Activated CD4-positive, alpha-beta memory T cell treated with anti-CD3 and anti-CD28 coated beads for 36 hours (primary cell): ENCODE measurements at regions of chr6 and their contacts with region 1.

Region 1: GRCh38 chr6:116570856-116571682 is at the start of gene RWDD1:
- DNase-seq: peak; percentile 99
- H3K4me3 Mint-ChIP-seq: peak within 1 kb of the TSS; percentile 97
- H3K27ac Mint-ChIP-seq: peak within 1 kb of the TSS; percentile 93
- H3K4me1 Mint-ChIP-seq: peaks cover 49% of the 10 kb centered on the region
- H3K27me3 Mint-ChIP-seq: no peaks in the 10 kb centered on the region
- total RNA-seq, gene RWDD1: 46.7 to 49.1 TPM

Region 2: DNA sequence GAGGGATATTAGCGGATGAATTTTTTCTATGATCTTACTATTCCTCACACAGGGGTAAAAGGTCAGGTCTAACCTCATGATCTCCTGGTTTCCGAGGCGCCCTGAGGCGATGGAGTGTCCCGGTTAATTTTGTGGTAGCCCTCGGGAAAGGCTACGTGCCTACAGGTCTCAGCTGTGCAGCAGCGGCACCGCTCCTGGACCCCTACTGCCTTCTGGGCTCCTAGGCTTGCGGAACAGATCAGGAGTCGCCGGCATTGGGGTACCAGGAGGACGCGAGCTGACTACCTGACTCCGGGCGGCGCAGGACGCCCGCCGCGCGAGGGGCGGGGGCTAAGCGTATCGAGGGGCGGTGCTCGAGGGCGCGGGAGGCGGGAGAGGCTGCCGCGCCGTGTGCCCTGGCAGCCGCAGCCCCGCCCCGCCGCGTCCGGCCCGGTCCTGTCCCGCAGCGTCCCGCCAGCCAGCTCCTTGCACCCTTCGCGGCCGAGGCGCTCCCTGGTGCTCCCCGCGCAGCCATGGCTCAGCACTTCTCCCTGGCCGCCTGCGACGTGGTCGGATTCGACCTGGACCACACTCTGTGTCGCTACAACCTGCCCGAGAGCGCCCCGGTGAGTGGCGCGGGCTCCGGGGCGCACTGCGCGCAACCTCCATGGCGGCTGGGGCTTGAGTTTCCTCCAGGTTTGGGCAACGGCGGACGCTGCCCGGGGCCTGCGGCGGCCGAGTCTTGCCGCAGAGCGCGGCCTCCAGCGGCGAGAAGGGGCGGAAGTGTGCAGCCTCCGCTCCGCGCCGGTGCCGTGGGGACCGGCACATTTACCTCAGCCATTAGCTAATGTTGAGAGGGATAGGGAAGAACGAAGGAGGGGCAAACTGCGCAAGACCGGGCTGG is 470.4 kb before region 1 on chr6 and contains the start of gene NT5DC1:
- CTCF ChIA-PET with region 1: no interaction called
- POLR2A ChIA-PET with region 1: interaction called, 3 read pairs
- intact Hi-C with region 1: loop called (anchors 1 kb)
- DNase-seq: peak; percentile 90
- H3K4me3 Mint-ChIP-seq: peak within 1 kb of the TSS; percentile 89
- H3K27ac Mint-ChIP-seq: peak within 1 kb of the TSS; percentile 82
- H3K4me1 Mint-ChIP-seq: peaks cover 47% of the 10 kb centered on the region
- H3K27me3 Mint-ChIP-seq: no peaks in the 10 kb centered on the region
- total RNA-seq, gene NT5DC1: 51.1 to 51.3 TPM

Region 3: DNA sequence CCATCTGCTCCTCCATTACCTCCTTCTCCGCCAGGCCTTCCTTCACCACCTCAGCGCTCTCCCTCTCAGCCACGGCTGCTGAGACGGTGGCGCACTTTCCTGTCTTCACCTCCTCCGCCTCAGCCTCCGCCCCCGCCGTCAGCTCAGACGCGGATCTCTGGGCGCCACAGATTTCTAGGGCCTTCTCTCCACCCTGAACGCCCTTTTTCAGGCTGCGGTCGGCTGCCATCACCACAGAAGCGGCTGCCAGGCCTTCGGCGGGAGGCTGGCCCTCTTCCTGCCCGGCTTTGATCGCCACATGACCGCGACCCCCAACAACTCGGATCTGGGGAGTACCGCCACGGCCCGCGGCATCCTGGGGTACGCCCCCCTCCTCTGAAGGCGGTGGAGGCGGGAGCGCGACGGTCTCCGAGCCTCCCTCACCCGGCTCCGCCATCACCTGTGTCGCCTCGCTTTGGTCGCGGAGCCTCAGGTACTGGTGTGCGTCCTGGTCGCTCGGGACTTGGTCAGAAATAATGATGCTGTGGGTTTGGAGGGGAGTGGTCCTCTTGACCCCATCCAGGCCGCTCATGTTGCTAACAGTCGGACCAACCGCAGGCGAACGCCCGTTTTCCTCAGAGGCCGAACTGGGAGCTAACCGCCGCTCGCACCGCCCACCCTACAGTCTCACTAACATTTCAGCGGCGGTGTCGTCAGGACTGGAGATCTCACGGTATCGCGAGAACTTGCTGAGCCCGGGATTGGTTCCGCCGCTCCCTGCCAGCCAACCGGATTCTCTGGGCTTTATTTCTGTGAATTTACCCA is 291.6 kb before region 1 on chr6 and contains the start of gene TSPYL1:
- CTCF ChIA-PET with region 1: interaction called, 9 read pairs
- POLR2A ChIA-PET with region 1: interaction called, 15 read pairs
- intact Hi-C with region 1: loop called (anchors 1 kb)
- DNase-seq: peak; percentile 97
- H3K4me3 Mint-ChIP-seq: peak within 1 kb of the TSS; percentile 91
- H3K27ac Mint-ChIP-seq: peak within 1 kb of the TSS; percentile 95
- H3K4me1 Mint-ChIP-seq: peaks cover 50% of the 10 kb centered on the region
- H3K27me3 Mint-ChIP-seq: no peaks in the 10 kb centered on the region
- total RNA-seq, gene TSPYL1: 41.4 to 42.0 TPM

Region 4: GRCh38 chr6:116371120-116371917 is 199.8 kb before region 1 on chr6:
- CTCF ChIA-PET with region 1: no interaction called
- POLR2A ChIA-PET with region 1: interaction called, 3 read pairs
- intact Hi-C with region 1: loop called (anchors 5 kb)
- DNase-seq: peak; percentile 49
- H3K4me3 Mint-ChIP-seq: peak overlapping the region; percentile 75
- H3K27ac Mint-ChIP-seq: no peak overlapping the region
- H3K4me1 Mint-ChIP-seq: peaks cover 15% of the 10 kb centered on the region
- H3K27me3 Mint-ChIP-seq: no peaks in the 10 kb centered on the region

Region 5: GRCh38 chr6:116615937-116616736 is 45.1 kb after region 1 on chr6 and contains the start of gene RSPH4A:
- CTCF ChIA-PET with region 1: interaction called, 3 read pairs
- POLR2A ChIA-PET with region 1: no interaction called
- intact Hi-C with region 1: loop called (anchors 1 kb)
- DNase-seq: peak; percentile 85
- H3K4me3 Mint-ChIP-seq: peak within 1 kb of the TSS; percentile 82
- H3K27ac Mint-ChIP-seq: no peak within 1 kb of the TSS
- H3K4me1 Mint-ChIP-seq: peaks cover 17% of the 10 kb centered on the region
- H3K27me3 Mint-ChIP-seq: no peaks in the 10 kb centered on the region
- total RNA-seq, gene RSPH4A: not detected

Region 6: DNA sequence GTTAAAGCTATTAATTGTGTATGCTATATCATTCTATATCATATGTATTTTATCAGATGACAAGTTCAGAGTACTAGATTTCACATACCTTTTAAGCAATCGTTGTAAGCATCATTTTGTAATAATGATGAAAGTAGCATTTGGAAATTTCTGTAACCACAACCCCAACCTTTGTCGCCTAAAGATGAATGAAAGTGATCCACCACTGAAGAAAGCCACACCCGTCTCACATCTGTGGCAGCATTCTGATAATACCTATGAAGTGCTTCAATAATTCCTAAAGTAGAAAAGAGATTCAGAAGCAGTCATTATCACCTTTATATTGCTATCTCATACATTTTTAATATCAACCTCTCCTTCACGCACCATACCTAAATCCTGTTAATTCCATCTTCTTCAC is 80.8 kb after region 1 on chr6:
- CTCF ChIA-PET with region 1: no interaction called
- POLR2A ChIA-PET with region 1: no interaction called
- intact Hi-C with region 1: no loop called
- DNase-seq: no peak
- H3K4me3 Mint-ChIP-seq: no peak overlapping the region
- H3K27ac Mint-ChIP-seq: no peak overlapping the region
- H3K4me1 Mint-ChIP-seq: peaks cover 8% of the 10 kb centered on the region
- H3K27me3 Mint-ChIP-seq: no peaks in the 10 kb centered on the region

Region 7: GRCh38 chr6:116680975-116681808 is 110.1 kb after region 1 on chr6 and contains the start of gene KPNA5:
- CTCF ChIA-PET with region 1: no interaction called
- POLR2A ChIA-PET with region 1: interaction called, 5 read pairs
- intact Hi-C with region 1: loop called (anchors 1 kb)
- DNase-seq: peak; percentile 95
- H3K4me3 Mint-ChIP-seq: peak within 1 kb of the TSS; percentile 99
- H3K27ac Mint-ChIP-seq: peak within 1 kb of the TSS; percentile 96
- H3K4me1 Mint-ChIP-seq: peaks cover 41% of the 10 kb centered on the region
- H3K27me3 Mint-ChIP-seq: no peaks in the 10 kb centered on the region
- total RNA-seq, gene KPNA5: 10.0 to 10.2 TPM

Region 8: GRCh38 chr6:117674991-117675657 is 1104.1 kb after region 1 on chr6 and contains the start of gene NUS1:
- CTCF ChIA-PET with region 1: no interaction called
- POLR2A ChIA-PET with region 1: no interaction called
- intact Hi-C with region 1: loop called (anchors 5 kb)
- DNase-seq: peak; percentile 99
- H3K4me3 Mint-ChIP-seq: peak within 1 kb of the TSS; percentile 95
- H3K27ac Mint-ChIP-seq: peak within 1 kb of the TSS; percentile 89
- H3K4me1 Mint-ChIP-seq: peaks cover 43% of the 10 kb centered on the region
- H3K27me3 Mint-ChIP-seq: no peaks in the 10 kb centered on the region
- total RNA-seq, gene NUS1: 33.6 to 33.9 TPM